Caco-2 (cell line): ENCODE measurements at regions of chr5 and their contacts with region 1.

Region 1: DNA sequence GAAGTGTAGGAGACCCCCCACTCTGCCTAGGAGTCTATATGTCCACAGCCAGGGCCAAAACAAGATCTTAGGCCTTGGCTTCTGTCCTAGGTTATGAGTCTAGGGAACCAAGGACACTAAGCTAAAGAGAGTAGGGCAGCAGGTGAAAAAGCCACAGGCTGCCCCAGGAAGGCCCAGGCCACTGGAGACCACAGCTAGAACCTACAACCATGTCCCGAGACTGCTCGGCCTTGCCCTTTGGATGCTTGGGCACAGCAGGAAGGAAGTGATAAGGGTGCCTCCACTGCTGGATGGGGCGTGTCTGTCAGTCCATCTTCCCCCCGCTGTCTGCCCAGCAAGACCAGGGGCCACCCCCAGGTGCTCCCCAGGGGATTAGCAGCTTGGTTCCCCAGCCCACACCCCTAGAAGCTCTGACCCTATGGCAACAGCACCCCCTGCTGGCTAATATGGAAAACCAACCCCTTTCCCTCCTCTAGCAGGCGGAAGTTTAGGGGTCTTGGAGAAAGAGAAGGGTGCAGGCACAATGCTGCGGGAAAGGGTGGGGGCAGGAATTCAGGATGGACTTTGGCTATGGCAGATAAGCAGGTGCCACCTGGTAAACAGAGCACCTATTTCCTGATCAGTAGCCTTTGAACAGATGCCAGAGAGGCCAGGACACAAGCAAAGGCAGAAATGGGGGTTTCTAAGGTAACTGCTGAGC is 10.5 kb upstream of the IRF1 start:
- DNase-seq: peak; percentile 70
- H3K4me3 ChIP-seq: no peak overlapping the region
- H3K4me3 Mint-ChIP-seq: no peak overlapping the region
- H3K27ac Mint-ChIP-seq: peak overlapping the region; percentile 39
- H3K4me1 ChIP-seq: peaks cover 54% of the 10 kb centered on the region
- H3K4me1 Mint-ChIP-seq: peaks cover 35% of the 10 kb centered on the region
- H3K27me3 ChIP-seq: no peaks in the 10 kb centered on the region
- H3K27me3 Mint-ChIP-seq: no peaks in the 10 kb centered on the region
- CTCF ChIP-seq: peak; percentile 75 to 88

Region 2: GRCh38 chr5:132190161-132190817 is 310.8 kb before region 1 on chr5:
- CTCF ChIA-PET with region 1: no interaction called
- POLR2A ChIA-PET with region 1: no interaction called
- intact Hi-C with region 1: loop called (anchors 1 kb)
- DNase-seq: peak in 1 of 2 experiments; percentile 70
- H3K4me3 ChIP-seq: no peak overlapping the region
- H3K4me3 Mint-ChIP-seq: no peak overlapping the region
- H3K27ac Mint-ChIP-seq: no peak overlapping the region
- H3K4me1 ChIP-seq: no peaks in the 10 kb centered on the region
- H3K4me1 Mint-ChIP-seq: no peaks in the 10 kb centered on the region
- H3K27me3 ChIP-seq: no peaks in the 10 kb centered on the region
- H3K27me3 Mint-ChIP-seq: no peaks in the 10 kb centered on the region
- CTCF ChIP-seq: peak; percentile 73 to 92

Region 3: DNA sequence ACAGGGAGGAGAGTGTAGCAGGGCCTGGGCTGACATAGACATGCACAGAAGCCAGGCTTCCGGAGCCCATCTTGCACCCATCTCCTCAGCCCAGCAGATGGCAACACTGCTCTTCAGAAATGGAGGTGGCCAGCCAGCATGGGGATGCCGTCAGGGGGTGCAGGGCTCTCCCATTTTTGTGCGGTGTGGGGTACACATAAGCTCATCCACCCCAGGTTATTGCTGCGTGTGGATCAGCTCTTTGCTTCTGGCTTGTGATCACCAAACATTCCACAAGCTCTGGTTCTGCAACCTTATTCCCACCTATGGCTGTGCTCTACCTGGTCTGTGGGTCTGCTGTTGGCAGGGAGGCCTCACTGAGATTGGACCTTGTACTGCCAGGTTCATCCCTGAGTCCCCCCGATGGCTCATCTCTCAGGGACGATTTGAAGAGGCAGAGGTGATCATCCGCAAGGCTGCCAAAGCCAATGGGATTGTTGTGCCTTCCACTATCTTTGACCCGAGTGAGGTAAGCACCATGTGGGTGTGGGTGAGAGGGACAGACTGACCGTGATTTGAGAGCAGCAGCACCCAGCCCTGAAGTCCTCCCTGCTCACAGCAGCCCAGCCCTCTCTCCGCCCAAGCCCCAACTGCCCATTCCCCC is 114.3 kb before region 1 on chr5:
- CTCF ChIA-PET with region 1: interaction called, 6 read pairs
- POLR2A ChIA-PET with region 1: interaction called, 3 read pairs
- intact Hi-C with region 1: loop called (anchors 1 kb)
- DNase-seq: peak; percentile 65
- H3K4me3 ChIP-seq: no peak overlapping the region
- H3K4me3 Mint-ChIP-seq: no peak overlapping the region
- H3K27ac Mint-ChIP-seq: no peak overlapping the region
- H3K4me1 ChIP-seq: peaks cover 29% of the 10 kb centered on the region
- H3K4me1 Mint-ChIP-seq: no peaks in the 10 kb centered on the region
- H3K27me3 ChIP-seq: no peaks in the 10 kb centered on the region
- H3K27me3 Mint-ChIP-seq: no peaks in the 10 kb centered on the region
- CTCF ChIP-seq: peak; percentile 69 to 73

Region 4: DNA sequence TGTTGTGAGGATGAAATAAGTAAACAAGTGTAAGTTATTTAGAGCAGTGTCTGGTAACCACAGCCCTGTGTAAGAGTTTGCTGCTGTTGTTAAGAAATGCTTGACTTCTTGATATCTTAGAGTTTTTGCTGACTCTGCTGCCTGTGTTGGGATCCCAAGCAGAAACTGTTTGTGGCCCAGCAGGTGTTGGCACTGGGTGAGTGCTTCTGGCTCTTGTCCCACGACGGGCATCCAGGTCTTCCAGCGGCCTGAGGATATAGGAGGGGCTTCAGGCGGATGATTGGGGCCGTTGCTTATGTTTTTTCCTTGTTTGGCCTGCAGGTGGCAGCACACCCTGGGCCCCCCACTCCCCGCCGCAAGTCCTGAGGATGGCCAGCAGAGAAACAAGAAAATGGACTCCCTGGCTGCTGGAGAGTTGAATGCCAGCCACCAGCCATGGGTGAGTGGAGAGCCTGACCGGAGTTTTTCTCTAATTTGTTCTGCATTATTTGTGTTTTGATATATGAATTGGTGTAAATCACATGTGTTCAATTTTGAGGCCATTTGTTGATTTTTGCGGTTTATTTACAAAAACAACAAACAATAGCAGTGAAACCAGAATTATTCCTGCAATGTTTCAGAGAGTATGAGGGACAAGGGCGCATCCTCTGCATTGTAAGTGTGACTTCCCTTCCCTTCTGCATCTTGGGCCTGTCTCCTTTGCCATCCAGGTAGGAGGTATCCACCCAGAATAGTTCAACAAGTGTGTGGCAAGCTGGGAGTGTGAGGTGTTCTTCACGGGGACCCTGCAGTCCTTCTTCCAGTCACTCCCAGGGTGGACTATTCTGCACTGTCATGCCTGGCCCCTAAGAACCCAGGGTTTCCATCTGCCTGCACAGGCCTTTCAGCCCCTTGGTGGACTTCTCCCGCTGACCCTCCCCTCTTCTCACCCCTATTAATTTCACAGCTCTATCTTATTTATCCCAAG is 81.3 kb before region 1 on chr5:
- CTCF ChIA-PET with region 1: interaction called, 4 read pairs
- POLR2A ChIA-PET with region 1: no interaction called
- intact Hi-C with region 1: loop called (anchors 1 kb)
- DNase-seq: peak; percentile 80 to 84
- H3K4me3 ChIP-seq: no peak overlapping the region
- H3K4me3 Mint-ChIP-seq: no peak overlapping the region
- H3K27ac Mint-ChIP-seq: peak overlapping the region; percentile 15
- H3K4me1 ChIP-seq: peaks cover 25% of the 10 kb centered on the region
- H3K4me1 Mint-ChIP-seq: peaks cover 17% of the 10 kb centered on the region
- H3K27me3 ChIP-seq: no peaks in the 10 kb centered on the region
- H3K27me3 Mint-ChIP-seq: no peaks in the 10 kb centered on the region
- CTCF ChIP-seq: peak; percentile 76 to 85

Region 5: GRCh38 chr5:132490486-132491367 is 10.4 kb before region 1 on chr5 and contains the start of gene IRF1:
- CTCF ChIA-PET with region 1: interaction called, 14 read pairs
- POLR2A ChIA-PET with region 1: interaction called, 4 read pairs
- intact Hi-C with region 1: no loop called
- DNase-seq: peak; percentile 95 to 97
- H3K4me3 ChIP-seq: peak within 1 kb of the TSS; percentile 89
- H3K4me3 Mint-ChIP-seq: peak within 1 kb of the TSS; percentile 81
- H3K27ac Mint-ChIP-seq: peak within 1 kb of the TSS; percentile 61
- H3K4me1 ChIP-seq: peaks cover 27% of the 10 kb centered on the region
- H3K4me1 Mint-ChIP-seq: peaks cover 7% of the 10 kb centered on the region
- H3K27me3 ChIP-seq: no peaks in the 10 kb centered on the region
- H3K27me3 Mint-ChIP-seq: no peaks in the 10 kb centered on the region
- CTCF ChIP-seq: peak in 1 of 2 experiments; percentile 4
- total RNA-seq, gene IRF1: 16.0 and 16.8 TPM in 2 replicates

Region 6: DNA sequence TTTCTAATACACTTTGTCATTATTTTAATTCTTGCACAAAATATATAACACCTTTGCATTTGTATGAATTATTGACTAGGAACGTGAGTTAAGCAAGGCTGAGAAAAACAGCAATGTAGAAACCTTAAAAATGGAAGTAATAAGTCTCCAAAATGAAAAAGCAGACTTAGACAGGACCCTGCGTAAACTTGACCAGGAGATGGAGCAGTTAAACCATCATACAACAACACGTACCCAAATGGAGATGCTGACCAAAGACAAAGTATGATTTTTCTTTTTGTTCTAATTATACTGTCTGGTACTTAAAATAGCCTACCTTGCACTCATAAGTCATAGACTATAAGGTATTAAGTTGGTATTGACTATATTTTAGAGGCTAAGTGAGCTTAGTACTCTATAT is 90.1 kb after region 1 on chr5:
- CTCF ChIA-PET with region 1: no interaction called
- POLR2A ChIA-PET with region 1: no interaction called
- intact Hi-C with region 1: no loop called
- DNase-seq: no peak
- H3K4me3 ChIP-seq: no peak overlapping the region
- H3K4me3 Mint-ChIP-seq: no peak overlapping the region
- H3K27ac Mint-ChIP-seq: no peak overlapping the region
- H3K4me1 ChIP-seq: no peaks in the 10 kb centered on the region; the same call in 1 of the 2 replicates
- H3K4me1 Mint-ChIP-seq: peaks cover 10% of the 10 kb centered on the region
- H3K27me3 ChIP-seq: no peaks in the 10 kb centered on the region
- H3K27me3 Mint-ChIP-seq: no peaks in the 10 kb centered on the region
- CTCF ChIP-seq: peak in 1 of 2 experiments; percentile 25